Activated CD4-positive, alpha-beta T cell treated with anti-CD3 and anti-CD28 coated beads for 36 hours (primary cell): ENCODE measurements at regions of chr19 and their contacts with region 1.

Region 1: DNA sequence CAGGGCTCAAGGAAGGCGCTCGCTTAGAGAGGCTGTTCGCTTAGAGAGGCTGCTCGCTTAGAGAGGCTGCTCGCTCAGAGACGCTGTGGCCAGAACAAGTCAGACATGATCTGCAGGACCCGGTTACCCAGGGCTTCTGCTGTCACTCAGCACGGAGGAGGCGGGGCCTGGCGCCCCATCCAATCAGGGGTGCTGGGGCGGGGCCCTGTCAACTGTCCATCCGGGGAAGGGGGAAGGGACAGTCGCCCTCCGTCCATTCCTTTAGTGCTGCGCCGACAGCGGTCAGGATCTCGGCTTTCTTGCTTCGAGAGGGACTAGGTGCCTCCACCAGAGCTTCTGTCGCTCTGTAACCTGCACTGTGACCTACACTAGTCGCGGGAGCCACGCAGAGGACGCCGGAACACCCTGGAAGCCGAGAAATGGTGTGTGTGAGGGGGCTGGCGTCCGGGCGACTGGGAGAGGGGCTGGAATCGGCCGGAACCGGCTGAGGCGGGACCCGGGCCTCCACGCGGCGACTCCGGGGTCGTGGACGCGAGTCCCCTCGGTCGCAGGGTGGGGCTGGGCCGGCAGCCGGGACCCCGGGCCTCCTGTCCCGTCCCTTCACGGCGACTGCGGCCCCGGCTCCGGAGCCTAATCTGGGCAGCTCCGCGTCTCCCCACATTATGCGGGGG is at the start of gene ZNF440:
- DNase-seq: peak; percentile 95
- ATAC-seq: peak; percentile 100
- H3K4me3 Mint-ChIP-seq: peak within 1 kb of the TSS; percentile 89
- H3K27ac Mint-ChIP-seq: peak within 1 kb of the TSS; percentile 73
- H3K4me1 Mint-ChIP-seq: peaks cover 20% of the 10 kb centered on the region
- H3K27me3 Mint-ChIP-seq: no peaks in the 10 kb centered on the region
- total RNA-seq, gene ZNF440: 7.0 to 7.7 TPM

Region 2: GRCh38 chr19:11639602-11640471 is 174.3 kb before region 1 on chr19:
- CTCF ChIA-PET with region 1: no interaction called
- POLR2A ChIA-PET with region 1: no interaction called
- intact Hi-C with region 1: loop called in 1 of 2 experiments (anchors 1 kb)
- DNase-seq: peak; percentile 98
- ATAC-seq: peak; percentile 100
- H3K4me3 Mint-ChIP-seq: peak overlapping the region; percentile 76
- H3K27ac Mint-ChIP-seq: no peak overlapping the region
- H3K4me1 Mint-ChIP-seq: no peaks in the 10 kb centered on the region
- H3K27me3 Mint-ChIP-seq: peaks cover 10% of the 10 kb centered on the region

Region 3: GRCh38 chr19:11694533-11695439 is 119.4 kb before region 1 on chr19:
- CTCF ChIA-PET with region 1: no interaction called
- POLR2A ChIA-PET with region 1: no interaction called
- intact Hi-C with region 1: loop called in 1 of 2 experiments (anchors 2 kb)
- DNase-seq: peak; percentile 96
- ATAC-seq: peak; percentile 99
- H3K4me3 Mint-ChIP-seq: peak overlapping the region; percentile 84
- H3K27ac Mint-ChIP-seq: peak overlapping the region; percentile 84
- H3K4me1 Mint-ChIP-seq: peaks cover 10% of the 10 kb centered on the region
- H3K27me3 Mint-ChIP-seq: peaks cover 28% of the 10 kb centered on the region

Region 4: GRCh38 chr19:11766597-11767591 is 47.3 kb before region 1 on chr19 and contains the start of gene ZNF441:
- CTCF ChIA-PET with region 1: interaction called, 3 read pairs
- POLR2A ChIA-PET with region 1: no interaction called
- intact Hi-C with region 1: loop called in 1 of 2 experiments (anchors 1 kb)
- DNase-seq: peak; percentile 98
- ATAC-seq: peak; percentile 99
- H3K4me3 Mint-ChIP-seq: peak within 1 kb of the TSS; percentile 88
- H3K27ac Mint-ChIP-seq: peak within 1 kb of the TSS; percentile 95
- H3K4me1 Mint-ChIP-seq: peaks cover 13% of the 10 kb centered on the region
- H3K27me3 Mint-ChIP-seq: peaks cover 12% of the 10 kb centered on the region
- total RNA-seq, gene ZNF441: 4.3 to 5.0 TPM

Region 5: GRCh38 chr19:11987405-11988281 is 173.5 kb after region 1 on chr19:
- CTCF ChIA-PET with region 1: no interaction called
- POLR2A ChIA-PET with region 1: no interaction called
- intact Hi-C with region 1: loop called in 1 of 2 experiments (anchors 5 kb)
- DNase-seq: peak; percentile 98
- ATAC-seq: peak; percentile 98
- H3K4me3 Mint-ChIP-seq: peak overlapping the region; percentile 86
- H3K27ac Mint-ChIP-seq: peak overlapping the region; percentile 92
- H3K4me1 Mint-ChIP-seq: peaks cover 18% of the 10 kb centered on the region
- H3K27me3 Mint-ChIP-seq: no peaks in the 10 kb centered on the region

Region 6: GRCh38 chr19:12705654-12706331 is 891.6 kb after region 1 on chr19:
- CTCF ChIA-PET with region 1: no interaction called
- POLR2A ChIA-PET with region 1: no interaction called
- intact Hi-C with region 1: no loop called
- DNase-seq: no peak
- ATAC-seq: no peak
- H3K4me3 Mint-ChIP-seq: no peak overlapping the region
- H3K27ac Mint-ChIP-seq: no peak overlapping the region
- H3K4me1 Mint-ChIP-seq: no peaks in the 10 kb centered on the region
- H3K27me3 Mint-ChIP-seq: no peaks in the 10 kb centered on the region